ENCODE measurements at regions of chr11 and their contacts with region 1.

Region 1: GRCh38 chr11:14751975-14752407 is 108.4 kb downstream of the PDE3B start:
- DNase-seq: peak in 1 of 5 donors; percentile 5
- H3K4me3 ChIP-seq: no peak overlapping the region
- H3K4me3 Mint-ChIP-seq: peak overlapping the region in 6 of 8 donors; percentile 36 to 82 (median 57)
- H3K27ac ChIP-seq: no peak overlapping the region
- H3K27ac Mint-ChIP-seq: peak overlapping the region; percentile 47 to 94 (median 82)
- H3K4me1 ChIP-seq: peaks cover 52% of the 10 kb centered on the region
- H3K4me1 Mint-ChIP-seq: peaks cover 36 to 45% (median 40%) of the 10 kb centered on the region in 4 donors
- H3K27me3 ChIP-seq: no peaks in the 10 kb centered on the region
- H3K27me3 Mint-ChIP-seq: no peaks in the 10 kb centered on the region

Region 2: GRCh38 chr11:14705067-14705466 is 46.9 kb before region 1 on chr11:
- CTCF ChIA-PET with region 1: no interaction called
- POLR2A ChIA-PET with region 1: no interaction called
- intact Hi-C with region 1: loop called (anchors 5 kb)
- DNase-seq: no peak
- H3K4me3 ChIP-seq: no peak overlapping the region
- H3K4me3 Mint-ChIP-seq: no peak overlapping the region
- H3K27ac ChIP-seq: no peak overlapping the region
- H3K27ac Mint-ChIP-seq: no peak overlapping the region
- H3K4me1 ChIP-seq: peaks cover 17% of the 10 kb centered on the region
- H3K4me1 Mint-ChIP-seq: peaks cover 10 to 46% (median 33%) of the 10 kb centered on the region in 4 donors
- H3K27me3 ChIP-seq: no peaks in the 10 kb centered on the region
- H3K27me3 Mint-ChIP-seq: no peaks in the 10 kb centered on the region

Region 3: GRCh38 chr11:14826600-14826999 is 74.6 kb after region 1 on chr11:
- CTCF ChIA-PET with region 1: no interaction called
- POLR2A ChIA-PET with region 1: no interaction called
- intact Hi-C with region 1: loop called (anchors 5 kb)
- DNase-seq: no peak
- H3K4me3 ChIP-seq: no peak overlapping the region
- H3K4me3 Mint-ChIP-seq: no peak overlapping the region
- H3K27ac ChIP-seq: no peak overlapping the region
- H3K27ac Mint-ChIP-seq: peak overlapping the region in 3 of 7 donors; percentile 19 to 35 (median 30)
- H3K4me1 ChIP-seq: no peaks in the 10 kb centered on the region
- H3K4me1 Mint-ChIP-seq: peaks cover 0 to 1% (median 0%) of the 10 kb centered on the region in 4 donors
- H3K27me3 ChIP-seq: no peaks in the 10 kb centered on the region
- H3K27me3 Mint-ChIP-seq: no peaks in the 10 kb centered on the region

Measured in CD4-positive, alpha-beta memory T cell (primary cell).